Lower lobe of right lung (tissue), 2 donors: ENCODE measurements at regions of chr3 and their contacts with region 1.

Region 1: DNA sequence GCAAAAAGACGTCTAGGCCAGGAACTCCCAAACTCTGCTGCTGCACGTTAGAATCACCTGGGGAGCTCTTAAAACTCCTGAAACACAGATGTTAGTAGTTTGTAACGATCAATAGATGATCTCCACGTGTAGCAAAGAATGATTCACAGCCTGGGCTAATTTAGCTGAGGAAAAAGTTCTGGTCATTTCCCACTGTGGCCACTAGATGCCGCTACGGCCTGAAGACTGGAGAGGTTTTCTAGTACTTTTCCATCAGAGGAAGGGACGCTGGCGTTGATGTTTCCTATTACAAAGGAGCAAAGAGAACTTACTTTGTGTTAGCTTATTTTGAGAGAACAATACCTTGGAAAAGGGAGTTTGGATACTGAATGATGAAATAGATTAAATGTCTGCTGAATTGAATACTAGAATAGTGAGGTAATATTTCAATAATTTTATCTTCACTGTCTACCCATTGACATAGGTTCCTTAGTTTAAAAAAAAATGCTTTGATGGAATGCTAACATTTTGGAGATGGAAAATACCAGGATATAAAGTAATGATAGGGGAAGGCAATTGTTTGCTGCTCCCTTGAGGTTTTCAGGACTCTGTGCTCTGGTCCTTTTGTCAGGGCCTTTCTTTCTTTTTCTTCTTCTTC is 159.1 kb downstream of the P3H2 start:
- DNase-seq: peak; percentile 54
- ATAC-seq: peak; percentile 84
- H3K4me3 ChIP-seq: no peak overlapping the region
- H3K27ac ChIP-seq: no peak overlapping the region
- H3K4me1 ChIP-seq: no peaks in the 10 kb centered on the region
- H3K27me3 ChIP-seq: no peaks in the 10 kb centered on the region
- CTCF ChIP-seq: peak; percentile 90

Region 2: GRCh38 chr3:189813647-189814240 is 147.9 kb before region 1 on chr3:
- intact Hi-C with region 1: no loop called
- DNase-seq: no peak
- ATAC-seq: no peak
- H3K4me3 ChIP-seq: no peak overlapping the region
- H3K27ac ChIP-seq: no peak overlapping the region
- H3K4me1 ChIP-seq: no peaks in the 10 kb centered on the region
- H3K27me3 ChIP-seq: no peaks in the 10 kb centered on the region
- CTCF ChIP-seq: no peak

Region 3: DNA sequence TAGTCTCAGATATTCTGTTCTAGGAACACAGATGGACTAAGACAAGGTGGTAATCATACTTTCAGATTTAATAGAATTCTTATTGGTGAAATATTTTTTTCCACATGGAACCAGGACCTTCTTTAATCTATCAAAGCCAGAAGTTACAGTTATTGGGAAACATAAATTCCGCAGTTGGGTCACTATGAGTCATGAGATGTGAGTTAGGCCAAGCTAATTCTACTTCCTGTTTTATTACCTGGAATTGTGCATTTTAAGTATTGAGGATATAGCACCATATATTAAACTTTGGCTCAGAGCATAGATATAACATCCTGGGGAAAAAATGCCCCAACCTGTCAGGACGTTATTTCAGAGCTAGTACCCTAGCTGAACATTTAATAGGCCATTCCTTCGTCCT is 255.4 kb after region 1 on chr3:
- intact Hi-C with region 1: loop called (anchors 10 kb)
- DNase-seq: no peak
- ATAC-seq: no peak
- H3K4me3 ChIP-seq: no peak overlapping the region
- H3K27ac ChIP-seq: no peak overlapping the region
- H3K4me1 ChIP-seq: no peaks in the 10 kb centered on the region
- H3K27me3 ChIP-seq: no peaks in the 10 kb centered on the region
- CTCF ChIP-seq: no peak

Region 4: GRCh38 chr3:190321789-190322603 is 360.4 kb after region 1 on chr3 and contains the start of gene CLDN1:
- intact Hi-C with region 1: loop called (anchors 10 kb)
- DNase-seq: peak; percentile 90
- ATAC-seq: peak; percentile 92 to 94
- H3K4me3 ChIP-seq: peak within 1 kb of the TSS; percentile 66
- H3K27ac ChIP-seq: peak within 1 kb of the TSS; percentile 37
- H3K4me1 ChIP-seq: peaks cover 22% of the 10 kb centered on the region
- H3K27me3 ChIP-seq: no peaks in the 10 kb centered on the region
- CTCF ChIP-seq: peak; percentile 98
- total RNA-seq, gene CLDN1: 5.2 TPM